Ascending aorta (tissue), 2 donors: ENCODE measurements at regions of chr15 and their contacts with region 1.

Region 1: GRCh38 chr15:63188926-63189871 is at the start of gene RAB8B:
- DNase-seq: peak; percentile 94 to 99
- H3K4me3 ChIP-seq: peak within 1 kb of the TSS; percentile 85 to 96
- H3K27ac ChIP-seq: peak within 1 kb of the TSS; percentile 84 to 90
- H3K4me1 ChIP-seq: peaks cover 0 to 13% of the 10 kb centered on the region in 2 donors
- H3K27me3 ChIP-seq: no peaks in the 10 kb centered on the region
- CTCF ChIP-seq: peak in 1 of 3 experiments; percentile 8
- total RNA-seq, gene RAB8B: 25.1 TPM

Region 2: DNA sequence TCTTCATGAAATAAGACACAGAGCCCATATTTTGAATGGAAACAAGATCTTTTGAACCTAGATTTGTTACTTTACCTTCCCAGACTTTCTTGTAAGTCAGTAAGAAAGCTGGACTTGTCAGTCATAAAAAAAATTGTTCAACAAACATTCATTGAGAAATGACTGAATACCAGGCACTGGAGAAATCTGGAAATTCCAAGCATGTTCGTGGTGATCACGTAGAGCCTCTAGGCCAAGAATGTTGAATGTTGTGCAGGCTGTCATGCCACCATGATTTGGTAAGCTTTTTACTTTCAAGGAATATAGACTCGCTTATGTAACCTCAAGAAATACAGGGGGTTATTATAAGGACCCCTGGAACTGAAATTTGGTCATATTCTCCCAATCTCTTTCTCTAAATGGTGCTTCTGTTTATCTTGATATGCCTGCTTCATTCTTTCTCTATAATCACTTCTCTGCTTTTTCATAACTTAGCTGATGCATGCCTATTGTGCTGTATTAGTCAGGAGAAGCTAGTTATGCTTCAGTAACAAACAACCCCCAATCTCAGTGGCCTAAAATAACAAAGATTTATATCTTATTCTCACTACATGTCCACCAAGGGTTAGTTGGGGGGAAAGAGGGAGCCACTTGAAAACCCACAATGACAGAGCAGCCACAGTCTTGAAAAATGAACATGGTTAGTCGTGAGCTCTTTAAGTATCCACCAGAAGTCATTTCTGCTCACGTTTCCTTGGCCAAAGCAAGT is 150.1 kb before region 1 on chr15:
- intact Hi-C with region 1: no loop called
- DNase-seq: no peak
- H3K4me3 ChIP-seq: no peak overlapping the region
- H3K27ac ChIP-seq: peak overlapping the region in 1 of 2 donors; percentile 29
- H3K4me1 ChIP-seq: peaks cover 0 to 13% of the 10 kb centered on the region in 2 donors
- H3K27me3 ChIP-seq: no peaks in the 10 kb centered on the region
- CTCF ChIP-seq: no peak

Region 3: GRCh38 chr15:63122002-63122893 is 67.0 kb before region 1 on chr15:
- intact Hi-C with region 1: loop called (anchors 1 kb)
- DNase-seq: peak; percentile 88 to 95
- H3K4me3 ChIP-seq: peak overlapping the region; percentile 73 to 77
- H3K27ac ChIP-seq: peak overlapping the region; percentile 76 to 89
- H3K4me1 ChIP-seq: peaks cover 0 to 4% of the 10 kb centered on the region in 2 donors
- H3K27me3 ChIP-seq: no peaks in the 10 kb centered on the region
- CTCF ChIP-seq: peak in 2 of 3 experiments; percentile 6 to 31

Region 4: GRCh38 chr15:63243101-63243500 is 53.9 kb after region 1 on chr15:
- intact Hi-C with region 1: loop called (anchors 2 kb)
- DNase-seq: no peak
- H3K4me3 ChIP-seq: no peak overlapping the region
- H3K27ac ChIP-seq: peak overlapping the region in 1 of 2 donors; percentile 42
- H3K4me1 ChIP-seq: peaks cover 4 to 25% of the 10 kb centered on the region in 2 donors
- H3K27me3 ChIP-seq: no peaks in the 10 kb centered on the region
- CTCF ChIP-seq: no peak

Region 5: GRCh38 chr15:63256433-63257274 is 67.5 kb after region 1 on chr15:
- intact Hi-C with region 1: no loop called
- DNase-seq: no peak
- H3K4me3 ChIP-seq: no peak overlapping the region
- H3K27ac ChIP-seq: no peak overlapping the region
- H3K4me1 ChIP-seq: peaks cover 0 to 7% of the 10 kb centered on the region in 2 donors
- H3K27me3 ChIP-seq: no peaks in the 10 kb centered on the region
- CTCF ChIP-seq: no peak

Region 6: DNA sequence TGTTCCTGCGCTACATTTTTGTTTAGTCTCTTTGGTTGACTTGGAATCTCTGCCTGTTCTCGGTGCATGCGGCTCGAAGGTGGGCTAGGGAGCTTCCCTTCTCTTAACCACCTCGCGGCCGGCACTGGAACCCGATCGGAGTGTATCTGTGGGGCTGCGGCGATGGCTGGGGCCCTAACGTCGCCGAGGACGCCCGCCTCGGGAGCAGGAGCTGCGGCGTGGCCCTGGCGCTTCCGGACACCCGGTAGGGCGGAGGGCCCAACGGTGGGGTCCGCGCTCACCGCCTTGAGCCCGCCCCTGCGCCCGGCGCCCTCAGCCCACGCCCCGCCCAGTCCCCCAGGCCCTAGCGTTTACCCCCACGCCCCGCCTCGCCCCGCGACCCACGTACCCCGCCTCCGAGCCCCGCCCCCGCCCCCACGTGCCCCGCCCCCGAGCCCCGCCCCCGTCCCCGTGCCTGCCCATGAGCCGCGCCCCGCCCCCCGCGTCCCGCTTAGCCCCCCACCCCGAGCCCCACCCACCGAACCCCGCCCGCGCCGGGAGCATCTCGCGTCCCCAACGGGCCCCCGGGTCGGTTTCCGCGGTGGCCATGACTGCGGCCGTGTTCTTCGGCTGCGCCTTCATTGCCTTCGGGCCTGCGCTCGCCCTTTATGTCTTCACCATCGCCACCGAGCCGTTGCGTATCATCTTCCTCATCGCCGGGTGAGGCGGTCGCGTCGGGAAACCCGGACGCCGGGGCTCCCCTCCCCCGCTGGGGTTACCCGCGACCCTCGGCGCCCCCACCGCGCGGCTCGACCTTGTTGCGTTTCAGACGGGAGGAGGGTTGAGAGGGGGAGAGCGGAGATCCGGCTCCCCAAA is 88.1 kb after region 1 on chr15 and contains the start of gene APH1B:
- intact Hi-C with region 1: loop called (anchors 1 kb)
- DNase-seq: peak in 1 of 2 donors; percentile 85
- H3K4me3 ChIP-seq: peak within 1 kb of the TSS; percentile 76 to 81
- H3K27ac ChIP-seq: peak within 1 kb of the TSS; percentile 84 to 87
- H3K4me1 ChIP-seq: peaks cover 0 to 4% of the 10 kb centered on the region in 2 donors
- H3K27me3 ChIP-seq: no peaks in the 10 kb centered on the region
- CTCF ChIP-seq: no peak
- total RNA-seq, gene APH1B: 17.0 TPM

Region 7: DNA sequence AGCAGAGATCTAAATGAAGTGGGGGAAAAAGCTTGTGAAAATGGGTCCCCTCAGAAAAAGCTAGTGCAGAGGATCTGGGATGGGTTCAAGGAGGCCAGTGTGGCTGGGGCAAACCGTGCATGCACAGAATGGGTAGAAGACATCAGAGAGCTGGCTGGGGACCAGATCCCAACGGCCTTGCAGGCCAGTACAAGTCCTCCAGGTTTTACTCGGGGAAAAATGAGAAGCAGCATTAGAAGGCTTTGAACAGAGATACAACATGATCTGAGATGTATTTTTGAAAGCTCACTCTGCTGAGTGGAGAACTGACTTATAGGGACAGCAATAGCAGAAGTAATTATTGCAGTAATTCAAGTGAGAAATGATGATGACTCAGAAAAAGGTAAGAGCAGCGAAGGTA is 530.1 kb after region 1 on chr15:
- intact Hi-C with region 1: no loop called
- DNase-seq: no peak
- H3K4me3 ChIP-seq: no peak overlapping the region
- H3K27ac ChIP-seq: no peak overlapping the region
- H3K4me1 ChIP-seq: peaks cover 0 to 4% of the 10 kb centered on the region in 2 donors
- H3K27me3 ChIP-seq: no peaks in the 10 kb centered on the region
- CTCF ChIP-seq: no peak